Astrocyte of the cerebellum (primary cell): ENCODE measurements at regions of chr17 and their contacts with region 1.

Region 1: DNA sequence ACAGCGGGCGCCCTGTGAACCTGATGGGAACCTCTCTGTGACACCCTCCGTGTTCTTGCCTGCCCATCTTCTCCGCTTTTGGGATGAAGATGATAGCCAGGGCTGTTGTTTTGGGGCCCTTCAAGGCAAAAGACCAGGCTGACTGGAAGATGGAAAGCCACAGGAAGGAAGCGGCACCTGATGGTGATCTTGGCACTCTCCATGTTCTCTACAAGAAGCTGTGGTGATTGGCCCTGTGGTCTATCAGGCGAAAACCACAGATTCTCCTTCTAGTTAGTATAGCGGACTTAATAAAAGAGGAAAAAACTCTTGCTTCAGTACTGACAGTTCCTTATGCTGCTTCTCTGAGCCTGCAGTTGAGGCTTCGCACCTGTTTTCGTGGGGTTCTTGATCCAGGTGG is 10.5 kb downstream of the CDK5RAP3 start:
- DNase-seq: no peak
- H3K4me3 ChIP-seq: no peak overlapping the region
- CTCF ChIP-seq: no peak

Region 2: GRCh38 chr17:47907932-47908562 is 73.4 kb before region 1 on chr17:
- in situ Hi-C with region 1: no loop called
- DNase-seq: no peak
- H3K4me3 ChIP-seq: no peak overlapping the region
- CTCF ChIP-seq: no peak

Region 3: DNA sequence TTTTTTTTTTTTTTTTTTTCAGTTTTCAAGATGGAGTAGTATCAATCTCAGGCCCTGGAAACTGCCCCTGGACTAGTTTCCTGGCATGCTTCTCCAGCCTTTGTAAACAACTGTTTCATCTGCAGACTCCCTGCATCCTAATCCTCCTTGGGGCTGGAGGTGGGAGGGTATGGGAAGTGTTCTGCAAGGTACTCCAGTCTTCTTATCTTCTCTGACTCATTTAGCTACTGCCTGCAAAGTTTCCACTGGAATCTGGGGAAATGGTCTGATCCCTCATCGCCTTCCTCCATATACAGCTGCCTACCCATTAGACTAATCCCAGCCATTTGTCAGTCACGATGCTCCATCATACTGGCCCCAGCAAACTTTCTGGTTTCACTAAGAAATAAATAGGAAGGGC is 34.6 kb after region 1 on chr17:
- in situ Hi-C with region 1: loop called (anchors 5 kb)
- DNase-seq: no peak
- H3K4me3 ChIP-seq: no peak overlapping the region
- CTCF ChIP-seq: no peak

Region 4: DNA sequence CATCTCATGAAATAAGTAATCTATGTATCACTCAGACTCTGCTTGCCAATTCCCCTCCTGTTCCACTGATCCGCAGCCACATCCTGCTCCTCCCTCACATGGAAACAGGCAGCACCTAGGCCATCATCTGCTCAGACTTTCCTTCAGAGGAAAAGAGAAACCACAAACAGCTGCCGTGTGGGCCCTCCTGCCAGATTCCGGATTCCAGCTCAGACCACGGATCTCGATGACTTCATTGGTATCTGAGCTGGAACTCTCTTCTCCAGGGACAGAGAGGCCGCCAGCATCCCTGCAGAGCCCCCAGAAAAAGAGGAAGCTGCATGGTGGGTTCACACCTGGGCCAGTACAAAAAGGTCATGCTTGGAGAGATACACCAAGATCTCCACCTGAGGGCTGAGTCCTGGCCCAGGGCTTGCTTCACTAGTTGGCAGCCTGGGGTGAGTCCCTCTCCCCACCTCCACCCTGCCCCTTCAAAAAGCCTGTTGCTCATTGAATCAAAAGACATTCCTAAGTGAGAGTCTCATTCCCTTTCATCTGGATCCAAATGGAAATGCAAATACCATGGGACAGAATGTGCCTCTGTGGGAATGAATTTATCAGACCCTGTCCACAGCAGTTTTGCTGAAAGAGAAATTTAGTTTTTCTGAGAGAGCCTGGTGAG is 502.1 kb after region 1 on chr17:
- in situ Hi-C with region 1: no loop called
- DNase-seq: peak; percentile 100
- H3K4me3 ChIP-seq: no peak overlapping the region
- CTCF ChIP-seq: no peak